Sigmoid colon (tissue), 7 donors: ENCODE measurements at regions of chr1 and their contacts with region 1.

Region 1: DNA sequence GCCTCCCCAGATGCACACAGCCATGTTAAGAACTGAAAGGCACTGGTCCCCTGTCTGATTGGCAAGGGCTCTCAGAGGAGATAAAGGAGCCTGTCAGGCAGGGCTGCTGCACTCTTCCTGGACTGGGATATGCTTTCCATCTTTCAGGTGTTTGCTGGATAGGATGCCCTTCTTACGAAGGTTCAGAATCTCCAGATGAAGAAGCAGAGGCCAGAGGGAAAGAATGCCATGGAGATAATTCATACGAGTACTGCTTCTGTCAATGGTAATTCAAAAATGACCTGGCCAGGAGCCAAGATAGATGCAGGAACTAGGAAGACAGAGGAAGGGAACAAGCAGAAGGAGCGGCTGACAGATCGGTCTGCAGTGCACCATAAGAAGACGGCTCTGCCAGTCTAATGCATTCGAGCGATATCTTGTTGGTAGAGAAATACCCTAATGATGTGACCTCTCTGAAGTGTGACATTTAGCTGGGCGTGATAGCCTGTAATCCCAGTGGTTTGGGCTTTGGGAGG is 16.6 kb upstream of the ATP2B4 start:
- DNase-seq: no peak
- H3K4me3 ChIP-seq: no peak overlapping the region
- H3K27ac ChIP-seq: peak overlapping the region in 3 of 4 donors; percentile 1 to 49 (median 45)
- H3K4me1 ChIP-seq: peaks cover 0 to 28% (median 22%) of the 10 kb centered on the region in 4 donors
- H3K27me3 ChIP-seq: no peaks in the 10 kb centered on the region
- CTCF ChIP-seq: no peak
- EP300 ChIP-seq: no peak
- POLR2A ChIP-seq: no peak

Region 2: GRCh38 chr1:203549309-203549708 is 60.7 kb before region 1 on chr1:
- intact Hi-C with region 1: no loop called
- DNase-seq: no peak
- H3K4me3 ChIP-seq: no peak overlapping the region
- H3K27ac ChIP-seq: peak overlapping the region in 3 of 4 donors; percentile 38 to 97 (median 89)
- H3K4me1 ChIP-seq: peaks cover 0 to 59% (median 42%) of the 10 kb centered on the region in 4 donors
- H3K27me3 ChIP-seq: no peaks in the 10 kb centered on the region
- CTCF ChIP-seq: no peak
- EP300 ChIP-seq: no peak
- POLR2A ChIP-seq: no peak

Region 3: DNA sequence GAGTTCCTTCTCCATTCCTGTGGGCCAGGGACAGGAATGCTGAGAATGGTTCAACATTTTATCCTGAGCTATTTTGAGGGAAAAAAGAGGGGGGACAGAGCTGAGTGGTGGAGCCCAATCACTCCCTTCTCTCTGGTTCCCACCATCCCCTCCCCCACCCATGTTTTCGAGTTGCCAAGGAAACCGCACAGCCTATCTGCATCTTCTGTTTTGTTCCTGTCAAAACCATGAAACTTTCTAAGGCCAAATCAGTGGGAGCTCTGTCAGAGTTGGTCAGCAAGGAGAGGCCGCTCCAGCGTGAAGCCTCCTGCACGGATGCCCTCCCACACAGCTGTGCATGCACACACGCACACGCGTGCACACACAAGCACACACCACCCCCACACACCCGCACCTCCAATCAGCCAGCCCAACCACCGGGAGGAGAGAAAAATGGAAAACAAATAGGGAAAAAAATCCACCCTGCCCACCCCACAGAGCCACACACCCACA is 37.9 kb before region 1 on chr1:
- intact Hi-C with region 1: loop called (anchors 5 kb)
- DNase-seq: no peak
- H3K4me3 ChIP-seq: no peak overlapping the region
- H3K27ac ChIP-seq: peak overlapping the region in 1 of 4 donors; percentile 49
- H3K4me1 ChIP-seq: peaks cover 0 to 6% (median 3%) of the 10 kb centered on the region in 4 donors
- H3K27me3 ChIP-seq: no peaks in the 10 kb centered on the region
- CTCF ChIP-seq: no peak
- EP300 ChIP-seq: no peak
- POLR2A ChIP-seq: no peak

Region 4: GRCh38 chr1:203843435-203843834 is 233.4 kb after region 1 on chr1:
- intact Hi-C with region 1: no loop called
- DNase-seq: no peak
- H3K4me3 ChIP-seq: no peak overlapping the region
- H3K27ac ChIP-seq: no peak overlapping the region
- H3K4me1 ChIP-seq: peaks cover 0 to 6% (median 0%) of the 10 kb centered on the region in 4 donors
- H3K27me3 ChIP-seq: no peaks in the 10 kb centered on the region
- CTCF ChIP-seq: no peak
- EP300 ChIP-seq: no peak
- POLR2A ChIP-seq: no peak